A549 (cell line): ENCODE measurements at regions of chr5 and their contacts with region 1.

Region 1: DNA sequence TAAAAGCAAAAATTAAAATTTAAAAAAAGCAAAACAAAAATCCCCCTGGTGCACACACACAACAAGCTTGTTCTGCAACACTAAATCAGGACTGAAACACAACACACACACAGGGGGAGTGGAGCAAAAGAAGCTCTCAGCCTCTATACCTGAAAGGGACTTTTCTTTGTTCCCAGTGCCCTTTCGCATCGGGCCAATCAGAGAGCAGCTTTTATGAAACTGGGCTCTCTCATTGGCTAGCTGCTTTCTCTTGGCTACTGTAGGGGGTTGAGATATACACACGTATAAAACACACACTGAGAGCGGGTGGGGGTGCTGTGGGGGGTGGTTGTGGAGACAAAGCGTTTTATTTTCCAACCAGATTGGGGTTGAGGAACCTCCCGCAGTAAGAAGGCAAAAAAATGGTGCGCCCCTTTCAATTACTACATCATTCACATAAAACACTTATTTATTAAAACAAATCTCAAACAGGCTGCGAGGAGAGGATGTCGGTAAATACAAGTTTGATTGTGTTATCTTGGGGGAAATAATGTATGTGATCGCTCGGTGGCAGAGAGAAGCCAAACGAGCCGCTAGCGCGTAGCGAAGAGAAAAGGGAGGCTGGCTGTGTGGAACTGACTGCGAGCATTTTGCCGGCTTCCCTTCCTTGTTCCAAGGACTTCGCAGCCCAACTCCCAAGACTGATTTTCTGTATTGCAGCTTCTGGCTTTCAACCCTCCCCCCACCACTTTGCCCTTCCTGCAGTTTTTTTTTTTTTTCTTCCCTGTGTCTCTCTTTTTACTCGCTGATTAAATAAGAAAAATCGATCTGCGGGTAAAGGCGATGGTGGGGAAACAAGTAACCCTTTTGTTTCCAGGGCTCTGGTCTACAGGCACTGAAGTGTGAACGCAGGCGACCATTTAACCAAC is 2.5 kb upstream of the ZNF608 start:
- DNase-seq: peak; percentile 90 to 93
- ATAC-seq: peak; percentile 95
- H3K4me3 ChIP-seq: peak overlapping the region; percentile 46
- H3K27ac ChIP-seq: peak overlapping the region; percentile 65
- H3K4me1 ChIP-seq: peaks cover 7% of the 10 kb centered on the region; the same call in 1 of the 3 replicates
- CTCF ChIP-seq: no peak
- EP300 ChIP-seq: no peak
- POLR2A ChIP-seq: no peak
- RAD21 ChIP-seq: no peak; a peak in 1 of 5 replicates

Region 2: DNA sequence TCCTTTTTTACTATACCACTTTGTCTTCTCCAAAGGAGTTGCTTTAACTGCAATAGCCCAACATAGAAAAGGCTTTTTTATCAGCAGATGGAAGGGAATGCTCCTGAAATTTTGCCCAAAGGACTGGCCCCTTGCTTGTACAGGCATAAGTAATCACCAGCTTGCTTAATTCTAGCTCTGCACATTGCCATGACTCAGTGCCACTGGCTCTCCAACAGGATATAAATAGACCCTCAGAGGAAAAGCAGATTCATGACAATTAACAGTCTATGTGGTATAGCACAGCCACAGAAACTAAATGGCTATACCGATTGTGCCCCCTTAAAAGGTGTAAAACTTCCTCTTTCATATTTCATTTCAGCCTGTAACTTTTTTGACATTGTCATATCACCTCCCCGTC is 229.5 kb before region 1 on chr5:
- CTCF ChIA-PET with region 1: no interaction called
- POLR2A ChIA-PET with region 1: no interaction called
- DNase-seq: no peak
- ATAC-seq: no peak
- H3K4me3 ChIP-seq: no peak overlapping the region
- H3K27ac ChIP-seq: no peak overlapping the region
- H3K4me1 ChIP-seq: no peaks in the 10 kb centered on the region
- CTCF ChIP-seq: no peak
- EP300 ChIP-seq: no peak
- POLR2A ChIP-seq: no peak
- RAD21 ChIP-seq: no peak

Region 3: GRCh38 chr5:124561451-124561850 is 187.5 kb before region 1 on chr5:
- CTCF ChIA-PET with region 1: no interaction called
- POLR2A ChIA-PET with region 1: no interaction called
- DNase-seq: no peak
- ATAC-seq: no peak
- H3K4me3 ChIP-seq: no peak overlapping the region
- H3K27ac ChIP-seq: no peak overlapping the region
- H3K4me1 ChIP-seq: no peaks in the 10 kb centered on the region
- CTCF ChIP-seq: no peak
- EP300 ChIP-seq: no peak
- POLR2A ChIP-seq: no peak
- RAD21 ChIP-seq: no peak

Region 4: DNA sequence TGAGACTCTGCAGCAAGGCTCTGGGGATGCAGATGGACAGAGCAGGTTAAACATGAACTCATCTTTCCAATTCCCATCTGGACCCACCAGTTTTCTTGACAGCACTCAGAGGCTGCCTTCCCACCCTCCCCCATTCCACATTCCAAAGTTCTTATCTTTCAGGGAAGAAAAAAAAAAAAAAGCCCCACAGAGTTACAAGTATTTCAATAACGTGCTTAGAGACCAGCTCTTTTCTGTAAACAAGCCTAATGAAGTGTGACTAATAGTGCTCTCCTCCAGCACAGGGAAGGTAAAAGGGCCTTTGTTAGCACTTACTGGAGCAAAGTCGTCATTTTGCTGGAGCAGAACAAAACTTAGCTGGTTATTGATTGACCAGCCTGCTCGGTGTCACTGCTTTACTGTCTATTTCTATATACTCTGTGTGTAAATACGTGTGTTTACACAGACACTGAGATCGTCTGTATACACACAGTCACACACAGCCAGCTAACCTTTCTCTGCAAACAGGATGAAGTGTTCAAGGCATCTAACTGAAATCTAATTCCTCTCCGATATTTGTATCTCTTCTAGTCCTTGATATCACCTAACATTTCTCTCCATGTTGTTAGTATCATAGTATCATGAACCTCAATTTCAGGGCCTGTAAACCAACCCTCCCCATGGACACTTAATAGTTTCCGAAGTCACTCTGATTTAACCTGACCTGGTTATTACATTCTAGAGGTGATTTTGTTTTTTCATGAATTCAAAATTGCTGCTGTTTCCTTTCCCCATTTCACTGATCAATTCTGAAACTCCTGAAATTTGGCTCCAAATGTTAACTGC is 87.4 kb before region 1 on chr5:
- CTCF ChIA-PET with region 1: no interaction called
- POLR2A ChIA-PET with region 1: interaction called, 12 read pairs
- DNase-seq: peak; percentile 69 to 97
- ATAC-seq: peak; percentile 85 to 92
- H3K4me3 ChIP-seq: peak overlapping the region; percentile 26; the same call in 1 of the 3 replicates
- H3K27ac ChIP-seq: peak overlapping the region; percentile 83 to 87
- H3K4me1 ChIP-seq: peaks cover 66% of the 10 kb centered on the region
- CTCF ChIP-seq: no peak
- EP300 ChIP-seq: peak; percentile 94 to 96
- POLR2A ChIP-seq: no peak
- RAD21 ChIP-seq: peak; percentile 52 to 82

Region 5: DNA sequence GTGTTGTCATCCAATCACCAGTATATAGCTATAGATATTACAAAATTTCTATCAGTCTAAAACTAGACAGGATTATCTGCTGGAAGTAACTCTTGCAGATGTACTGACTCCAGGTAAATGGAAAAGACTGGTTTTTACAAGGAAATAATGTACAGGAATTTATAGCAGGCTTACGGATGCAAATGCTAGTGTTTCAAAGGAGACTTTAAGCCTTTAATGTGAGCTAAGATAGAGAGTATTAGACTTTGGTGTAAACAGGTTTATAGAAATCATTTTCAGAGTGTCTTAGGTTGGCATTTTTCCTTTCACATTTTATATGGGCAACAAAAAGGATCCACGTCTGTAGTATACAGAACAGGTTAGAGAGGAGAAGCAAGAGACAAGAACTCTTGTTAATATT is 18.6 kb before region 1 on chr5:
- CTCF ChIA-PET with region 1: no interaction called
- POLR2A ChIA-PET with region 1: no interaction called
- DNase-seq: no peak
- ATAC-seq: no peak
- H3K4me3 ChIP-seq: no peak overlapping the region
- H3K27ac ChIP-seq: no peak overlapping the region
- H3K4me1 ChIP-seq: no peaks in the 10 kb centered on the region
- CTCF ChIP-seq: no peak
- EP300 ChIP-seq: no peak
- POLR2A ChIP-seq: no peak
- RAD21 ChIP-seq: no peak

Region 6: GRCh38 chr5:124812754-124813358 is 63.9 kb after region 1 on chr5:
- CTCF ChIA-PET with region 1: no interaction called
- POLR2A ChIA-PET with region 1: no interaction called
- DNase-seq: no peak
- ATAC-seq: no peak
- H3K4me3 ChIP-seq: no peak overlapping the region
- H3K27ac ChIP-seq: no peak overlapping the region
- H3K4me1 ChIP-seq: no peaks in the 10 kb centered on the region
- CTCF ChIP-seq: no peak
- EP300 ChIP-seq: no peak
- POLR2A ChIP-seq: no peak
- RAD21 ChIP-seq: no peak